Left ventricle myocardium inferior (tissue), 1 donor: ENCODE measurements at regions of chr16 and their contacts with region 1.

Region 1: DNA sequence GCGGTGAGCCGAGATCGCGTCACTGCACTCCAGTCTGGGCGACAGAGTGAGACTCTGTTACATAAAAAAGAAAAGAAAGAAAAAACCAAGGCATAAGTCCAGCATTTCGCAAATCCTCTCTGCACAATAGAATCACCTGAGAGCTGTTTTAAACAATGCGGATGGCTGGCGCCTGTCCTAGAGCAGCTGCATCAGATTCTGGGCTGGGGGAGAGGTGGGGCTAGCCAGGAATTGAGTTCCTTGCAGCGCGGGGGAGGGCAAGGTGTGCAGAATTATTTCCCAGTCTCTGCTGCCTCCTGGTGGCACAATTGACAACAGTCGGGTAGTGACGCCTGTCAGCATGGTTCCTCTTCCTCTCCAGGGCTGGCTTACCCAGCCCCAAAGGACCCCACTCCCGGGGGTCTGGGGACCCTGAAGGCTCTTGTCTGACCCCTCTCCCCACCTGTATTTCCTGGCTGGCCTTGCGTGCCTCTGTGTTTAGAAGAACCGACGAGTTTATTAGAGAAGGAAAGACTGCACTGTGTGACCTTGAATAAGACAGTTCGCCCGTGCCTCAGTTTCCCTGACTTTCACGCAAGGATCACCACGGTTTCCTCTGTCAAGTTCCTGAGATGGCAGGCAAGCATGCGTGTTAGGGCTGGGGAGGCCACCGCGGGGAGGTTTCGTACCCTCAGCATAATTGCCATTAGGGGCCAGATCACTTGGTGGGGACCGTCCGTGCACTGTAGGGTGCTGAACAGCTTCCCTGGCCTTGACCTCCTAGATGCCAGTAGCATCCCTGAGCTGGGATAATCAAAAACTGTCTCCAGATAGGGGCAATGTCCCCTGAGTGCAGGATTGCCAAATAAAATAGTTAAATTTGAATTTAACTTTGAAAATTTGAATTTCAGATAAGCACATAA is 41.0 kb upstream of the PLCG2 start:
- DNase-seq: peak; percentile 71
- H3K4me3 ChIP-seq: peak overlapping the region; percentile 51
- H3K27ac ChIP-seq: no peak overlapping the region
- H3K4me1 ChIP-seq: peaks cover 10% of the 10 kb centered on the region
- H3K27me3 ChIP-seq: no peaks in the 10 kb centered on the region
- CTCF ChIP-seq: peak; percentile 89

Region 2: GRCh38 chr16:81035398-81035974 is 702.6 kb before region 1 on chr16 and contains the start of gene ATMIN:
- intact Hi-C with region 1: loop called (anchors 10 kb)
- DNase-seq: peak; percentile 87
- H3K4me3 ChIP-seq: peak within 1 kb of the TSS; percentile 77
- H3K27ac ChIP-seq: peak within 1 kb of the TSS; percentile 89
- H3K4me1 ChIP-seq: peaks cover 47% of the 10 kb centered on the region
- H3K27me3 ChIP-seq: no peaks in the 10 kb centered on the region
- CTCF ChIP-seq: peak; percentile 95
- total RNA-seq, gene ATMIN: 22.0 TPM

Region 3: GRCh38 chr16:81204798-81205680 is 533.1 kb before region 1 on chr16:
- intact Hi-C with region 1: loop called (anchors 10 kb)
- DNase-seq: no peak
- H3K4me3 ChIP-seq: no peak overlapping the region
- H3K27ac ChIP-seq: no peak overlapping the region
- H3K4me1 ChIP-seq: no peaks in the 10 kb centered on the region
- H3K27me3 ChIP-seq: peaks cover 14% of the 10 kb centered on the region
- CTCF ChIP-seq: peak; percentile 71

Region 4: DNA sequence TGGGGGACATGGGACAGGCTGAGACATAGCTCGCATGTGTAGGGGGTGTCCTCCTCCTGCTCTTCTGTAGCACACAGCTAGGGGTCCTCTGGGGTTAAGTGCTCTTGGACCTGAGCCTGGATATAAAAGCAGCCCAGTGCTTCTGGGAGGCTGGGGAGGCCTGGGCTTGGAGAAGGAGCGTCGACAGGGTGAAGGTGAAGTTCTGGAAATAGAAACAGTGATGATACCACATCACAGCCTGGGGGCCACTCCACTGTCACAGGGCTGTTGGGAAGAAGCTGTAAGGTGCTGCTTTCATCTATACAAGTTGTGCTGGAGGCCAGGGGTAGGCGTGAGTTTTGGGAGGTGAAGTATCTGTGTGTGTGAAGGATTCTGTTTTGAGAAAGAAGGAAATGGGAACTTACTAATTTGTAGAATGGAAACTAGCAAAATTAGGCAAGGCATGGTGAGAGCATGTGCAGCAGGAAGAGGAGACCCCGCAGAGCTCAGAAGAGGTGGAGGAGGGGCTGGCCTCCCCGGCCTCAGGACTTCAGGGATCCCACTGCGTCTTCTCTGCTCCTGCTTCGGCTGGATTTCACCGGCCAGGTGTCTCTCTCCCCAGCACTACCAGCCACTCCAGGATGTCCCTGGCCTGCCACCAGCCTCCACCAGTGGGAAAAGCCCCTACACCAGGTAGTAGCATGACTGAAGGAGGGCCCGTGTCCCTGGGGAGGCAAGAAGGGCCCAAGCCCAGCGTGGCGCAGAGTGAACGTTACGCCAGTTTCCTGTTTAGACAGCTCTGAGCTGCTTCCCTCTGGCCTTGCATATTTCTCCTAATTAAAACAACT is 60.4 kb after region 1 on chr16:
- intact Hi-C with region 1: no loop called
- DNase-seq: no peak
- H3K4me3 ChIP-seq: no peak overlapping the region
- H3K27ac ChIP-seq: no peak overlapping the region
- H3K4me1 ChIP-seq: peaks cover 12% of the 10 kb centered on the region
- H3K27me3 ChIP-seq: no peaks in the 10 kb centered on the region
- CTCF ChIP-seq: no peak